BJ (cell line): ENCODE measurements at regions of chr1 and their contacts with region 1.

Region 1: GRCh38 chr1:150149271-150150132 is at the start of gene PLEKHO1:
- DNase-seq: peak; percentile 22
- H3K4me3 ChIP-seq: peak within 1 kb of the TSS; percentile 78
- H3K27me3 ChIP-seq: no peaks in the 10 kb centered on the region
- CTCF ChIP-seq: no peak
- polyA plus RNA-seq, gene PLEKHO1: 27.9 and 41.3 TPM in 2 replicates

Region 2: DNA sequence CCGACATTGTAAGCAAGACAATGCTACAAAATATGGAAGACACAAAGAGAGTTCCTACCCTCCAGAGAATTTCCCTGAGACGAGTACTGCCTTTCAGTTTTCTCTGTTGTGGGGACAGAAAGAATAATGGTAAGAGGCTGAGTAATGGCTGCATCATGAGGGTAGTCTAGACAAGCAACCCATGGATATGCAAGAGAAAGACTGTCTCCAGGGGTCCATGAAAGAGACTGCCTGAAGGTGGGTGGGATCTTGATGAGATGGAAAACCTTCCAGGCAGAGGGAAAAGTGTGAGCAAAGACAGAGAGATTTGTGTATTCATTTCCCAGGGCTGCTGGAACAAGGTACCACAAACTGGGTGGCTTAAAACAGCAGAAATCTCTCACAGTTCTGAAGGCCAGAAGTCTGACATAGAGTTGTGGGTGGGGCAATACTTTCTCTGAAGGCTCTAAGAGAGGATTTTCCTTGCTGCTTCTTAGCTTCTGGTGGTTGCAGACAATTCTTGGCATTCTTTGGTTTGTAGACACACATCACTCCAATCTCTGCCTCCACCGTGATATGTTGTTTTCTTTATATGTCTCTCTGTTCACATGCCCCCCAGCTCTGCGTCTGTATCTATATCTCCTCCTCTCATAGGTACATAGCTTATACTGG is 45.0 kb after region 1 on chr1:
- CTCF ChIA-PET with region 1: no interaction called
- POLR2A ChIA-PET with region 1: interaction called, 32 read pairs
- DNase-seq: no peak
- H3K4me3 ChIP-seq: no peak overlapping the region
- H3K27me3 ChIP-seq: no peaks in the 10 kb centered on the region
- CTCF ChIP-seq: no peak